ENCODE measurements at regions of chr1 and their contacts with region 1.

Region 1: GRCh38 chr1:31789259-31790065 is 25.3 kb upstream of the ADGRB2 start:
- DNase-seq: peak; percentile 91
- H3K4me3 Mint-ChIP-seq: peak overlapping the region; percentile 89
- H3K27ac Mint-ChIP-seq: no peak overlapping the region
- H3K4me1 Mint-ChIP-seq: peaks cover 16% of the 10 kb centered on the region
- H3K27me3 Mint-ChIP-seq: peaks cover 4% of the 10 kb centered on the region

Region 2: GRCh38 chr1:31065310-31066217 is 723.9 kb before region 1 on chr1 and contains the start of gene PUM1:
- intact Hi-C with region 1: loop called (anchors 10 kb)
- DNase-seq: peak; percentile 97
- H3K4me3 Mint-ChIP-seq: peak within 1 kb of the TSS; percentile 99
- H3K27ac Mint-ChIP-seq: peak within 1 kb of the TSS; percentile 98
- H3K4me1 Mint-ChIP-seq: peaks cover 35% of the 10 kb centered on the region
- H3K27me3 Mint-ChIP-seq: no peaks in the 10 kb centered on the region
- total RNA-seq, gene PUM1: 130 and 132 TPM in 2 replicates

Region 3: DNA sequence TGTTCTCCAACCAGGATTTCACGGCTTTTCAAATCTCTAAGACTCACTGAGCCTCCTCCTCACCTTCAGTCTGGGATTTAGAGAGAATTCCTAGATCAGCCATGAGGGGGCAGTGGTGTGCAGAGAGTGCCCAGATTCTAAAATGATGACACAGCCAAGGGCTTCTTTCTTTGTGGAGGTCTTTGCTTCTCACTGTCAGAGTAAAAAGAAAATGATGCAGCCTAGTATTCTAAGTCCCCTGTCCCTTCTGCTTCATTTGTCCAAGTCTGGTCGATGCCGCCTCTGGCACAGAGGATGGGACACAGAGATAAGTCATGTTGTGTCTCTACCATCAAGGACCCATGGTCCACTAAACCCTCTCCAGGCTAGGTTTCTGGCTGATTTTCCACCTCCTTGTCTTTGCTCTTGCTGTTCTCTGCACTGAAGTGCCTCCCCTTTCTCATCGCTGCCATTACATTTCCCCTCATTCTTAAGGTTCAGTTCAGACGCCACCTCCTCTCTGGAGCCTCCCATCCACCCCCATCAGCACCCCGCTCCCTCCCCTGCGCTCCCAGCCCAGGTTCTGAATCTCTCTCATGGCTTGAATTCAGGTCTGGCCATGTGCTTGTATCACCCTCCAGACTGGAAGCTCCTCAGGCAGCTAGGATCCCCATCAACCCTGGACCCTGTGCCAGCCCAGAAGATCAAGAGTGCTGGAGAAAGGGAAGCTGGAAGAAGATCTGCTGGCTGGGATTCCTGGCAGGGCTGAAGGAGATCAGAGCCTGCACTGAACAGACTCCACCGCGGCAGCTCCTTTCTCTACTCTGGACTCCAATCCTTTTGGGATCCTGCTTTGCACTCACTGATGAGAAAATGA is 225.1 kb before region 1 on chr1:
- intact Hi-C with region 1: loop called (anchors 1 kb)
- DNase-seq: peak; percentile 25
- H3K4me3 Mint-ChIP-seq: no peak overlapping the region
- H3K27ac Mint-ChIP-seq: no peak overlapping the region
- H3K4me1 Mint-ChIP-seq: no peaks in the 10 kb centered on the region
- H3K27me3 Mint-ChIP-seq: peaks cover 15% of the 10 kb centered on the region

Region 4: DNA sequence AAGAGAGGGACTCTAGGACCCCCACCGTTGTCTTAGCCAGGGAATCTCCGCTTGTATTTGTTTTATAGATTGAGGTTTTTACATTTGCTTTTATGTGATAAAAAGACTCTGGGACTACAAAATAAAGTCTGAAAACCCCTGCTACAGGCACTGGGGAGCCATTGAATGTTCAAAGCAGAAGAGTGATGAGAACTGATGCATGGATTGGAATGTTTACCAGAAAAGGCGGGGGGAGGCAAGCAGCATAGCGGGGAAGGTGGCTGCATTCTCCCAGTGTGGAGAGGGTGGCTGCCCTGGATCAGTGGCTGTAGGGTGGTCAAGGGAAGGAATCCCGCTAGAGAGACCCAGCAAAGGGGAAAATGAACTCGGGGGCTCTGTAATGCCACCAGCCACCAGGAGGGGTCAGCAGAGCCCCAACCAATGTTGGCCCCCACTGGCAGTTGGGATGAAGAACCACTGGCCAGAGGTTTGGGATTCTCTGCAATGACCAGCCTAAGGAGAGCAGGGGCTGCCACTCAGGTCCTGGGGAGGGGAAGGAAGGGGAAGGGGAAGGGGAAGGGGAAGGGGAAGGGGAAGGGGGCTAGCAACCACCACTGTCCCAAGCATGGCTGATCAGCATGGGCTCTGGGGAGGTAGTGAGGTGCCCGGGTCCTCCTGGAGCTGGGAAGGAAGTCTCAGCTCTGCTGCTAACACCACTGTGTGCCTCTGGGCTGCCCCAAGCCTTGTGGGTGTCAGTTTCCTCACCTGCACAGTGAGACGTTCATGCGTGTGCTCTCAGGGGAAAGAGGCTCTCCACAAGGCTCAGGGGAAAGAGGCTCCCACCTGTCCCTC is 125.6 kb before region 1 on chr1:
- intact Hi-C with region 1: loop called (anchors 1 kb)
- DNase-seq: peak; percentile 27
- H3K4me3 Mint-ChIP-seq: no peak overlapping the region
- H3K27ac Mint-ChIP-seq: no peak overlapping the region
- H3K4me1 Mint-ChIP-seq: no peaks in the 10 kb centered on the region
- H3K27me3 Mint-ChIP-seq: peaks cover 10% of the 10 kb centered on the region

Region 5: GRCh38 chr1:31715087-31715872 is 74.2 kb before region 1 on chr1:
- intact Hi-C with region 1: loop called (anchors 2 kb)
- DNase-seq: no peak
- H3K4me3 Mint-ChIP-seq: no peak overlapping the region
- H3K27ac Mint-ChIP-seq: no peak overlapping the region
- H3K4me1 Mint-ChIP-seq: no peaks in the 10 kb centered on the region
- H3K27me3 Mint-ChIP-seq: peaks cover 60% of the 10 kb centered on the region

Region 6: DNA sequence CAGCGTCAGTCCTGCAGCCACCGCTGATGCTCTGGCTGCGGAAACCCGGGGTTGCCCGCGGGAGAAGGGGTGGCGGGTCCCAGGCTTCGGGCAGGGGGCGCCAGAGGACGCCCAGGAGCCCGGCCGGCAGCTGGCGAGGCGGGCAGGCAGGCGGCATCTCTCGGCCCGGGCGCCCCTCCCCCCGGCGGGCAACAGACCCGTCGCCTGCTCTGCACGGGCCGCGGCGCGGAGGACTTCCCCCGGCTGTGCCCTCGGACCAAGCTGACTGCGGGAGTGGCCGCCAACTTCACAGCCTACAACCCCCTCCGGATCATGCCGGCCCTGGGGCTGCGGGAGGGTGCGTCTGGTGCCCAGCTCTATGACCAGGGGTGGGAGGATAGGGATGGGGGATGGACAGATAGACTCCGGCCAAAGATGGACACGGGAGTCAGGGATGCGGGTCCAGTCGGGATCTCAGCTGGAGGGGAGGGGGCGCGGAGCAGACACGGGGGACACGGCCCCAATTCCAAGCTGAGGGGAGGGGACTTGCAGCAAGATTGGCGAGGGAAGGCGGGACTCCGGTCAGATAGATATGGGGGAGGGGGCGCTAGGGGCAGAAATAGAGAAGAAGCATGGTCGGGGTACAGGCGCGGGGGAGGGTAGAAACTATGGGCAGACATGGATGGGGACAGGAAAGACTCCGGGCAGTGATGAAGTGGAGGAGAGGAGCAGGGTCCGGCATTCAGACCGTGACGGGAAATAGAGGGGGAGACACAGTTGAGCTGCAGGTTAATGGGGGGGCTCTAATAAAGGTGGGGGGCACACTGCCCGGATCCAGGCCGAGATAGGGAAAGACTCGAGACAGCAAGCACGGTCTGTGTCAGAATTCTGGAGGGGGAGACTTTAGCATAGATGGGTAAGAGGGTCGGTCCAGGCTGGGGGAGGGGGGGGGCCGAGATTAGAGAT is 26.5 kb before region 1 on chr1:
- intact Hi-C with region 1: loop called (anchors 1 kb)
- DNase-seq: peak; percentile 42
- H3K4me3 Mint-ChIP-seq: peak overlapping the region; percentile 65
- H3K27ac Mint-ChIP-seq: no peak overlapping the region
- H3K4me1 Mint-ChIP-seq: peaks cover 25% of the 10 kb centered on the region
- H3K27me3 Mint-ChIP-seq: peaks cover 60% of the 10 kb centered on the region